ENCODE measurements at regions of chr6 and their contacts with region 1.

Region 1: DNA sequence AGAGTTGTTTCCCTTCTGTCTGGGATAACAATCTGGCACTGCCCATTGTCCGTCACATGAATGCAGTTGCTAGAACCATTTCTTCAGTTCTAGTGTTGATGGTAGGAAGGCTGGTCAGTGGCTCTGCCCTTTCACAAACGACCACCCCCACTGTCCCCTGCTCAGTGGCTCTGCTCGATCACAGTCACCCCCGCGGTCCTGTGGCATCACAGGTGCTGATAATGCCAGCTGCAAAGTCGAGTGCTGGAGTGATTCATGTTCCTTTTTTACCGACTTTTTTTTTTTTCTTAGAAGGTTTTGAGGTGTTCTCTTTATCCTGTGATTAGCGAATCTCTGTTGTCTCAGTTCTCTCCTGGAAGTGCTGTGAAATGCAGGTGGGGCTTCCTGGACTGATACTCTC is 22.8 kb downstream of the FAM120B start:
- DNase-seq: no peak
- H3K4me3 ChIP-seq: no peak overlapping the region
- H3K27ac ChIP-seq: no peak overlapping the region
- H3K4me1 ChIP-seq: no peaks in the 10 kb centered on the region
- H3K27me3 ChIP-seq: no peaks in the 10 kb centered on the region
- CTCF ChIP-seq: no peak

Region 2: DNA sequence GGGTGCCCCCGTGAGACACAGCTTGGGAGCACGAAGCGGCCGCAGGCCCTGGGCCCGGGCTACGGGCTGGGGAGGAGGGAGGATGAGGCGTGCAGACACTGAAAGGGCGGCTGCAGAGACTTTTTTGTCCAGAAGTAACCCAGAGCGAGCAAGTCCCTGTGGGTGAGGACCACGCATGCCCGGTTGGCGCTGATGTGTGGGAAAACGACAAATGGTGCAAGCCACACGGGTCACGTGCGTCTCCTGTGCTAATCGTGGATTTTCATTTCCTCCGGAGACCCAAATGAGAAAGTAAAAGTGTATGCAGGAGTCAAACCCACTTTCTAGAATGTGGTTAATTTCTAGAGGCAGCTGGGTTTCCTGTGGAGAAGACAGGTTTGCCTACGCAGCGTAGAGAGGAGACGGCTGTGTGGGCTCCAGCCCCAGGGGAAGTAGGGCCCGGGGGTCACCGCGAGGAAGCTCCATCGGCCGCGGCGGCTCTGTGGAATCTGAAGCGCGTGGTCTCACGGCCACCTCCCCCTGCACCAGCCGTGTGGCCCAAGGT is 57.5 kb before region 1 on chr6:
- CTCF ChIA-PET with region 1: no interaction called
- dilution Hi-C with region 1: no loop called
- in situ Hi-C with region 1: no loop called
- intact Hi-C with region 1: no loop called
- DNase-seq: no peak
- H3K4me3 ChIP-seq: no peak overlapping the region
- H3K27ac ChIP-seq: no peak overlapping the region
- H3K4me1 ChIP-seq: no peaks in the 10 kb centered on the region
- H3K27me3 ChIP-seq: no peaks in the 10 kb centered on the region
- CTCF ChIP-seq: no peak

Region 3: GRCh38 chr6:170316071-170316470 is 13.2 kb before region 1 on chr6:
- CTCF ChIA-PET with region 1: no interaction called
- dilution Hi-C with region 1: no loop called
- in situ Hi-C with region 1: no loop called
- intact Hi-C with region 1: no loop called
- DNase-seq: no peak
- H3K4me3 ChIP-seq: no peak overlapping the region
- H3K27ac ChIP-seq: no peak overlapping the region
- H3K4me1 ChIP-seq: no peaks in the 10 kb centered on the region
- H3K27me3 ChIP-seq: no peaks in the 10 kb centered on the region
- CTCF ChIP-seq: no peak

Region 4: GRCh38 chr6:170371588-170371987 is 42.3 kb after region 1 on chr6:
- CTCF ChIA-PET with region 1: no interaction called
- dilution Hi-C with region 1: no loop called
- in situ Hi-C with region 1: no loop called
- intact Hi-C with region 1: no loop called
- DNase-seq: no peak
- H3K4me3 ChIP-seq: no peak overlapping the region
- H3K27ac ChIP-seq: no peak overlapping the region
- H3K4me1 ChIP-seq: peaks cover 12% of the 10 kb centered on the region
- H3K27me3 ChIP-seq: no peaks in the 10 kb centered on the region
- CTCF ChIP-seq: no peak

Region 5: DNA sequence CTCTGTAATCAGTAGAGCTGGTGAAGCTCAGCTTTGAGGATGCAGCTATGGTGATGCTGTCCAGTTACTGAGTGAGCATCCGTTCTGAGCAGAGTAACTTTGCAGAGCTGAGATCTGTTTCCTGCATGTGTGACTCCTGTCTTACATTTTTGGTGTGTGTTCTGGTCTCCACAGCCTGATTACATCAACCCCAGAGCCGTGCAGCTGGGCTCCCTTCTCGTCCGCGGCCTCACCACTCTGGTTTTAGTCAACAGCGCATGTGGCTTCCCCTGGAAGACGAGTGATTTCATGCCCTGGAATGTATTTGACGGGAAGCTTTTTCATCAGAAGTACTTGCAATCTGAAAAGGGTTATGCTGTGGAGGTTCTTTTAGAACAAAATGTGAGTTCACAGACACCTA is 58.8 kb after region 1 on chr6:
- CTCF ChIA-PET with region 1: no interaction called
- dilution Hi-C with region 1: loop called (anchors 5 kb)
- in situ Hi-C with region 1: no loop called
- intact Hi-C with region 1: no loop called
- DNase-seq: no peak
- H3K4me3 ChIP-seq: no peak overlapping the region
- H3K27ac ChIP-seq: no peak overlapping the region
- H3K4me1 ChIP-seq: peaks cover 14% of the 10 kb centered on the region
- H3K27me3 ChIP-seq: no peaks in the 10 kb centered on the region
- CTCF ChIP-seq: no peak

Region 6: DNA sequence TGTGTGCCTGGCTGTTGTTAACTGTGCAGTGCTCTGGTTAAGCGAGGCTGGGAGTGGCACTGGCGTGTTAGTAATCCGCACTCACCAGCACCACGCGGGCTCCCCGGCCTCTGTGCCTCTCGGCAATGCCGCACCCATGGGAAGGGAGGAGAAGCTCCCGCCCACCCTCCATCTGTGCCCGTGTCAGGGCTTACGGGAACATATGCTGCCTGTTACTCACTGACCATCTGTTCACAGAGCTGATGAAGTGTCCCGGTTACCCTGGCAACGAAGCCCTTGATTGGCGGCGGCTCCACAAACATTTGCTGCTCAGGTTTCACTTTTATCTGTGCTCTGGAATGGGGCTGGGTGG is 109.1 kb after region 1 on chr6:
- CTCF ChIA-PET with region 1: no interaction called
- dilution Hi-C with region 1: no loop called
- in situ Hi-C with region 1: no loop called
- intact Hi-C with region 1: no loop called
- DNase-seq: peak; percentile 100
- H3K4me3 ChIP-seq: no peak overlapping the region
- H3K27ac ChIP-seq: peak overlapping the region; percentile 93
- H3K4me1 ChIP-seq: peaks cover 19% of the 10 kb centered on the region
- H3K27me3 ChIP-seq: no peaks in the 10 kb centered on the region
- CTCF ChIP-seq: no peak

Measured in mammary epithelial cell (primary cell).